ENCODE measurements at regions of chr2 and their contacts with region 1.

Region 1: DNA sequence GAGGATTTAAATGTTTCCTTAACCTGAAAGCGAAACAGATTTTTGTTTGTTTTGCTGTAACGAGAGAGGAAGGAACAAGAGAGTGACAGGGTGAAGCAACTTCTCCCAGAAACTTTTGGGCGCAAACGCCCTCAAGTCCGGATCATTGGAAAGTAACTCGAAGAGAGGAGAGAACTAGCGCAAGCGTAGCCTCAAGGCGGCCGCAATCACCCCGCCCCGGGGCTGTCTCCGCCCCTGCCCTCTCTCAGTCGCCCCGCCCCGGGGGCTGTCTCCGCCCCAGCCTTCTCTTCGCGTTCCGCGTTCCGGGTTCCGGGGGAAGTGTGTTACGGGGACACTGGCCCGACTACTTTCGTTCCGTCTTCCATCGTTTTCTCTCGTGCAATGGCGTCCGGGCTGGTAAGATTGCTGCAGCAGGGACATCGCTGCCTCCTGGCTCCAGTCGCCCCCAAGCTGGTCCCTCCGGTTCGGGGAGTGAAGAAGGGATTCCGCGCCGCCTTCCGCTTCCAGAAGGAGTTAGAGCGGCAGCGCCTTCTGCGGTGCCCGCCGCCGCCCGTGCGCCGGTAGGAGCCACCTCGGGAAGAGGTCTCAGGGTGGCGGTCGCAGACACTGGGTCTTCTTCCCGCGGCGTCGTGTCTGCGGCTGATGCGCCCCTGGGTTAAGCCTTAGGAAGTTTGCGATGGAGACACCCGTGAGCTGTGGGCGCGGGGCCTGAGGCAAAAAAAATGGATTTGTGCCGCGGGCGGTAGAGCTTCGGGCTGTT is at the start of gene MRPL44:
- DNase-seq: peak; percentile 83 to 96
- H3K4me3 ChIP-seq: peak within 1 kb of the TSS; percentile 85
- H3K4me1 ChIP-seq: peaks cover 18% of the 10 kb centered on the region
- H3K27me3 ChIP-seq: no peaks in the 10 kb centered on the region

Region 2: DNA sequence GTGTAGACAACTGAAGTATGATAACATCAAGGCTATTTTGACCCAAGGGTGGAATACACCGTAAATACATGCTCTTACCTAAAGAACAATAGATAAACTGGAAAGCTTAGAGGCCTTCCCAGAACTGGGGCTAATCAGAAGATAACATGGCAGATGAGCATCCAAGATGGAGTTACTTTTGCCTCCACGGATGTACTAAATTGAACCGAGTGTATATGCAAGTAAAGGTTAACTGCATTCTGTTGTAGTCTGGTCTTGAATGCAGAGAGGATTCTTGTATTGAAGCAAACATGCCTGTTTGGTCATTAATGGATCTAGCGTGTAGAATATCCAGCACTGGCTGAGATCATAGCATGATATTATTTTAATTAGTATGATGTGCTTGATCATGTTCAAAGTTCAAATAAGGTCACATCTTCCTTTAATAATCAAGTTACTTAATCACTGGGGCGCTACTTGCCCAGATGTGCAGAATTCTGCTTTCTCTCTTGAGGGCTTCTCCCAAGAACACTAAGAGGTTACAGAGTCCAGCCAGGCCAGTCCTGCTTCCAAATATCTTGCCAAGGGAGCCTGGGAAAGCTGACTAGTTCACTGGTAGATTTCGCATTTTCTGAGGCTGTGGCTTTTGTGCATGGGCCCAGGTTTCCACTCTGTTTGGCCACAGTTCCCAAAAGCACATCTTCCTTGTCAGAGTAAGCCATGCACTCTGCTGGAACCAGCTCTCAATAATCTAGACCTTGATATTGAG is 1133.9 kb before region 1 on chr2:
- in situ Hi-C with region 1: no loop called
- DNase-seq: no peak
- H3K4me3 ChIP-seq: no peak overlapping the region
- H3K4me1 ChIP-seq: no peaks in the 10 kb centered on the region
- H3K27me3 ChIP-seq: peaks cover 2% of the 10 kb centered on the region; the same call in 1 of the 2 replicates

Region 3: GRCh38 chr2:223433461-223433860 is 523.8 kb before region 1 on chr2:
- in situ Hi-C with region 1: no loop called
- DNase-seq: no peak
- H3K4me3 ChIP-seq: no peak overlapping the region
- H3K4me1 ChIP-seq: no peaks in the 10 kb centered on the region
- H3K27me3 ChIP-seq: peaks cover 2% of the 10 kb centered on the region; the same call in 1 of the 2 replicates

Region 4: DNA sequence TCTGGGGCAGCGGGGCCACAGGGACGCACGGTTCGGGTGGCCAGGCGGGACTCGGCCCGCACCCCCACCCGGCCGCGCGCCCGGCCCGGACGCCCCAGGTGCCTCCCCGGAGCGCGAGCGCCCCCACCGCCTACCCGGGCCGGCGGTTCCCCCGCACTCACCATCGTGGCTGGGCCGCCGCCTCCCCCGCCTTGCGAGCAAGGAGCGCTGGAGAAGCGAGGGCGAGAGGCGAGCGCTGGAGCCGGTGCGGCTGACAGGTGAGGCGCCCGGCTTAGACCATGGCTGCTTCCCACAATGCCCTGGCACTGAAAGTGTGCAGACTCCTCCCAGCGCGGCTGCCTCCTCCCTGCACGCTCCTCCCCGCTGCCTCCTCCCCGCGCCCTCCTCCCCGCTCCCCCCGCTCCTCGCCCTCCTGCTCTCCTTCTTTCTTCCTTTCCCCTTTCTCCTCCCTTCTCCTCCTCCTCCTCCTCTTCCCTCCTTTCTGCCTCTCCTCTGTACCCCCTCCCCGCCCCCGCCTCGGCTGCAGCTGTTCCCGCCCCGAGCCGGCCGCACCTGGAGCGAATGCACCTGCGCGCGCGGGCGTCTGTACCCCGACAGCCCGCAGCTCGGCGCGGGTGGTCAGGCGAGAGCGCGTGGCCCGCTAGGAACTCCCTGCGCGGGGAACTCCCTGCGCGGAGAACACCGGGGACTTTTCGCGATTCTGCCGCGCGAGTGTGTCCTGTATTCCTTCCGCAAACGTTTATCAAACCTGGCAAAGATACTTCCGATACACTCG is 119.8 kb before region 1 on chr2 and contains the start of gene AP1S3:
- in situ Hi-C with region 1: loop called (anchors 10 kb)
- DNase-seq: peak; percentile 74 to 87
- H3K4me3 ChIP-seq: peak within 1 kb of the TSS; percentile 61
- H3K4me1 ChIP-seq: peaks cover 20% of the 10 kb centered on the region
- H3K27me3 ChIP-seq: no peaks in the 10 kb centered on the region